MCF 10A (cell line): ENCODE measurements at regions of chr3 and their contacts with region 1.

Region 1: GRCh38 chr3:189512039-189512438 is 119.2 kb upstream of the TP63 start:
- DNase-seq: no peak
- H3K4me3 Mint-ChIP-seq: no peak overlapping the region
- H3K27ac Mint-ChIP-seq: peak overlapping the region; percentile 99
- H3K4me1 Mint-ChIP-seq: peaks cover 45% of the 10 kb centered on the region
- H3K27me3 Mint-ChIP-seq: no peaks in the 10 kb centered on the region
- CTCF ChIP-seq: no peak

Region 2: GRCh38 chr3:189324538-189325138 is 187.4 kb before region 1 on chr3:
- CTCF ChIA-PET with region 1: no interaction called
- POLR2A ChIA-PET with region 1: interaction called, 12 read pairs
- intact Hi-C with region 1: no loop called
- DNase-seq: peak; percentile 98
- H3K4me3 Mint-ChIP-seq: no peak overlapping the region
- H3K27ac Mint-ChIP-seq: peak overlapping the region; percentile 69
- H3K4me1 Mint-ChIP-seq: peaks cover 30% of the 10 kb centered on the region
- H3K27me3 Mint-ChIP-seq: no peaks in the 10 kb centered on the region
- CTCF ChIP-seq: no peak

Region 3: GRCh38 chr3:189458532-189458931 is 53.5 kb before region 1 on chr3:
- CTCF ChIA-PET with region 1: no interaction called
- POLR2A ChIA-PET with region 1: interaction called, 10 read pairs
- intact Hi-C with region 1: no loop called
- DNase-seq: peak; percentile 80
- H3K4me3 Mint-ChIP-seq: peak overlapping the region; percentile 26
- H3K27ac Mint-ChIP-seq: peak overlapping the region; percentile 70
- H3K4me1 Mint-ChIP-seq: peaks cover 29% of the 10 kb centered on the region
- H3K27me3 Mint-ChIP-seq: no peaks in the 10 kb centered on the region
- CTCF ChIP-seq: no peak

Region 4: DNA sequence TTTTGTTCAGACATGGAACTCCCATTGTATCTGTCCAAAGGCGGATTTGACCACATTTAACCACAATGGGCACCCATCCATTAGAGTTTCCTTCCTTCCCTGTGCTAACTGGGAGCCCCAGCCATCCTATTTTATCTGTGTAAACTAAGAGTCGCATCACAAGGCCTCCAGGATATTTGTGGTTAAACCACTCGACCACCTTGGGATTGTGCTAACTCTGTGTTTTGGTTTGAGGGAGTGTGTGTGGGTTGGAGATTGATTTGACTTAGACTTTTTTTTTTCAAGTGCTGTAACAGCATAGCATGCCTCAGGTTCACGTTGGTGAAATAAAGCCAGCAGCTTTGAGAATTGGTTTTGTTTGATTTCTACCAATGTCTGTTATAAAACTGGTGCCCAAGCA is 18.8 kb after region 1 on chr3:
- CTCF ChIA-PET with region 1: no interaction called
- POLR2A ChIA-PET with region 1: no interaction called
- intact Hi-C with region 1: no loop called
- DNase-seq: no peak
- H3K4me3 Mint-ChIP-seq: no peak overlapping the region
- H3K27ac Mint-ChIP-seq: peak overlapping the region; percentile 11
- H3K4me1 Mint-ChIP-seq: no peaks in the 10 kb centered on the region
- H3K27me3 Mint-ChIP-seq: no peaks in the 10 kb centered on the region
- CTCF ChIP-seq: no peak

Region 5: GRCh38 chr3:189563866-189564563 is 52.0 kb after region 1 on chr3:
- CTCF ChIA-PET with region 1: interaction called, 4 read pairs
- POLR2A ChIA-PET with region 1: interaction called, 50 read pairs
- intact Hi-C with region 1: loop called (anchors 5 kb)
- DNase-seq: peak; percentile 92
- H3K4me3 Mint-ChIP-seq: no peak overlapping the region
- H3K27ac Mint-ChIP-seq: peak overlapping the region; percentile 69
- H3K4me1 Mint-ChIP-seq: peaks cover 26% of the 10 kb centered on the region
- H3K27me3 Mint-ChIP-seq: no peaks in the 10 kb centered on the region
- CTCF ChIP-seq: no peak

Region 6: DNA sequence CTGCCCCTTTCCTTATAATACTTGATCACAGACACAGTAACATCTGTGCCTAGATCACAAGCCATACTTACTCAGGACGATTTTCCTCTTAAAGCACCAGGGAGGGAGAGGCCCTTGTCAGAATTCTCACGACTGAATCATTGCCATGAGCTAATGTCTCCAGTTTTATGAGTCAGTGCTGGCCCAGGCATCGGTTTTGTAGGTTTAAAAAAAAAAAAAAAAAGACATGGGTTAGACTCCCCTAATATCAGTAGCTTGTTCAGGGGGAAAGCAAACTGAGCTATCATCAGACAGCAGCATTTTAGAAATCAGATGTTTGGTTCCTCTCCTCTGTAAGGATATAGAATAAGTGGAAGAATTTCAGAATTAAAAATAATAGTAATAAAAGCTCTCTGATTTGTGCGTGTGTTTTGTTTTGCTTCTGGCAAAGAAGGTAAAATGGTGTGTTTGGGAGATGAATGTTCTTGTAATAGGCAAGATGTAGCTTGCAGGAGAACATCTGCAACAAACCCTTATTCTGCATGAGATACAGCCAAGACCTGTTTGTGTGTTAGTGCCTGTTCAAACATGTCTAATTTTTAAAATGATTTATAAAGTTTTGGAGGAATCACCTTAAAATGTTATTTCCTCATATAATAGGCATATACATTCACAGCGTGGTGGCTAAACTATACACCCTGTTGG is 312.7 kb after region 1 on chr3:
- CTCF ChIA-PET with region 1: no interaction called
- POLR2A ChIA-PET with region 1: interaction called, 11 read pairs
- intact Hi-C with region 1: no loop called
- DNase-seq: peak; percentile 96
- H3K4me3 Mint-ChIP-seq: peak overlapping the region; percentile 42
- H3K27ac Mint-ChIP-seq: peak overlapping the region; percentile 83
- H3K4me1 Mint-ChIP-seq: peaks cover 31% of the 10 kb centered on the region
- H3K27me3 Mint-ChIP-seq: no peaks in the 10 kb centered on the region
- CTCF ChIP-seq: no peak

Region 7: DNA sequence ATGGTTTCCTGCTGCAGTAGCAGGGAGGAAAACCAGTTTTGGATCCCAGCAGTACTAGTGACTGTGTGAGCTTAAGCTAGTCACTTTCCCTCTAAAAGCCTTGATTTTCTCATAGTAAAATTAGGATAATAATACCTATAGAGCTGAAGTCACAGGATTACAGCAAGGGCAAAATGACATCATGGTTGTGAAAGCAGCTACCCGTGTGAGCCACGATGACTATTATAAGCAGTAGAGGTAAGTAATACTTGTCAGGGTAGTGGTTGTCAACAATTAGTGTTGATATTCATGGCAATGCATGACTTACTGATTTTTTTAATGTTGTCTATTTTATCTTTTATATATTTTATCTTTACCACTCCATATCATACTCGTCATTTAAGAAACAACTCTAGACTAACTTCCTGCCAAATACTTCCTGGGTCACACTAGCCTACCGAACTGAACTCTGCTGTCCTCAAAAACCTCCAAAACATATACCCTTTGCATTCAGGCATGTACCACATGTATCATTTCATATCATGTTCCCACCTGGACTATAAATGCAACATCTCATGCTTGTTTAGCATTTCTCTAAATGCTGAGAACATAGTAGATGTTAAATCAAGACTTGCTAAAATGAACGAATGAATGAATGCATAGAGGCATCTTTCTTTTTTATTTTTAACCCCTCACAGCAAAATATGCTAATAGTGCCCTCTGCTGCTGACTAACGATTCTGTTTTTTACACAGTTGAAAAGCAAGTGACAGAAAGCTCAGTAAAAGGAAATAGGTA is 436.1 kb after region 1 on chr3:
- CTCF ChIA-PET with region 1: interaction called, 6 read pairs
- POLR2A ChIA-PET with region 1: interaction called, 11 read pairs
- intact Hi-C with region 1: no loop called
- DNase-seq: peak; percentile 73
- H3K4me3 Mint-ChIP-seq: no peak overlapping the region
- H3K27ac Mint-ChIP-seq: peak overlapping the region; percentile 74
- H3K4me1 Mint-ChIP-seq: peaks cover 26% of the 10 kb centered on the region
- H3K27me3 Mint-ChIP-seq: no peaks in the 10 kb centered on the region
- CTCF ChIP-seq: peak; percentile 76